ENCODE measurements at regions of chr6 and their contacts with region 1.

Region 1: GRCh38 chr6:73329201-73329600 is 24.9 kb downstream of the DPPA5 start:
- DNase-seq: no peak
- H3K4me3 ChIP-seq: no peak overlapping the region
- CTCF ChIP-seq: no peak

Region 2: GRCh38 chr6:73285674-73286283 is 43.4 kb before region 1 on chr6:
- CTCF ChIA-PET with region 1: interaction called, 291 read pairs
- POLR2A ChIA-PET with region 1: interaction called, 3 read pairs
- DNase-seq: peak; percentile 9
- H3K4me3 ChIP-seq: no peak overlapping the region
- CTCF ChIP-seq: peak; percentile 42

Region 3: DNA sequence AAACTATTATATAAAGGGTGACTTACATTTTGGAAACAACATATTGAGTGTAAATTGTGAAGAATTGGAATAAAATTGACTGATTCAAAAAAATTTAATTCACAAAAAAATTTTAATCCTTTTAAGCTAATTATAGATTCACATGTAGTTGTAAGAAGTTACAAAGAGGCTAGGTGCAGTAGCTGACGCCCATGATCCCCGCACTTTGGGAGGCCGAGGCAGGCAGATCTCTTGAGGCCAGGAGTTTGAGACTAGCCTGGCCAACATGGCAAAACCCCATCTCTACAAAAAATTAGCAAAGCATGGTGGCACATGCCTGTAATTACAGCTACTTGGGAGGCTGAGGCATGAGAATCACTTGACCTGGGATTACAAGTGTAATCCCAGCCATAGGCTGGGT is 35.9 kb before region 1 on chr6:
- CTCF ChIA-PET with region 1: interaction called, 291 read pairs
- POLR2A ChIA-PET with region 1: no interaction called
- DNase-seq: no peak
- H3K4me3 ChIP-seq: no peak overlapping the region
- CTCF ChIP-seq: no peak

Region 4: GRCh38 chr6:73309769-73310502 is 19.3 kb before region 1 on chr6:
- CTCF ChIA-PET with region 1: interaction called, 17 read pairs
- POLR2A ChIA-PET with region 1: no interaction called
- DNase-seq: no peak
- H3K4me3 ChIP-seq: peak overlapping the region; percentile 81
- CTCF ChIP-seq: peak; percentile 70

Region 5: DNA sequence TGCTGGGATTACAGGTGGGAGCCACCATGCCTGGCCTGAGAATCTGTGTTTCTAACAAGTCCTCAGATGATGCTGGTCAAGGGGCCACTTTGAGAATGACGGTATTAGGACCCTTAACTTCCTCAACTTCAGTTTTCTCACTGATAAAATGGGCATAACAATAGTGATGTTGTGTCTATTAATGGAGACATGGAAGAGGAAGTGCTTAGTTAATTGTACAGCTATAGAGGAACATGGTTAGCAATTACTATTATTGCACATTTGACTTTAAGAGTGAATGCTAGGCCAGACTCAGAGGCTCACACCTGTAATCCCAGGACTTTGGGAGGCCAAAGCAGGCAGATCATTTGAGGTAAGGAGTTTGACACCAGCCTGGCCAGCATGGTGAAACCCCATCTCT is 12.1 kb after region 1 on chr6:
- CTCF ChIA-PET with region 1: interaction called, 23 read pairs
- POLR2A ChIA-PET with region 1: no interaction called
- DNase-seq: no peak
- H3K4me3 ChIP-seq: no peak overlapping the region
- CTCF ChIP-seq: no peak